Right lobe of liver (tissue), 6 donors: ENCODE measurements at regions of chr2 and their contacts with region 1.

Region 1: GRCh38 chr2:207746131-207746530 is 23.6 kb downstream of the FZD5 start:
- DNase-seq: peak in 2 of 3 donors; percentile 49 to 63
- ATAC-seq: peak; percentile 77 to 87 (median 80)
- H3K4me3 ChIP-seq: no peak overlapping the region
- H3K27ac ChIP-seq: peak overlapping the region in 2 of 3 donors; percentile 61 to 85
- H3K4me1 ChIP-seq: peaks cover 0 to 39% (median 17%) of the 10 kb centered on the region in 4 donors
- H3K27me3 ChIP-seq: no peaks in the 10 kb centered on the region
- CTCF ChIP-seq: peak; percentile 85 to 95 (median 91)
- POLR2A ChIP-seq: no peak

Region 2: GRCh38 chr2:208033758-208034502 is 287.8 kb after region 1 on chr2:
- intact Hi-C with region 1: loop called (anchors 10 kb)
- DNase-seq: peak; percentile 42 to 72 (median 61)
- ATAC-seq: peak; percentile 97 to 99 (median 98)
- H3K4me3 ChIP-seq: no peak overlapping the region
- H3K27ac ChIP-seq: peak overlapping the region in 2 of 3 donors; percentile 12 to 25
- H3K4me1 ChIP-seq: no peaks in the 10 kb centered on the region
- H3K27me3 ChIP-seq: no peaks in the 10 kb centered on the region
- CTCF ChIP-seq: peak; percentile 59 to 79 (median 64)
- POLR2A ChIP-seq: no peak